ENCODE measurements at regions of chr6 and their contacts with region 1.

Region 1: DNA sequence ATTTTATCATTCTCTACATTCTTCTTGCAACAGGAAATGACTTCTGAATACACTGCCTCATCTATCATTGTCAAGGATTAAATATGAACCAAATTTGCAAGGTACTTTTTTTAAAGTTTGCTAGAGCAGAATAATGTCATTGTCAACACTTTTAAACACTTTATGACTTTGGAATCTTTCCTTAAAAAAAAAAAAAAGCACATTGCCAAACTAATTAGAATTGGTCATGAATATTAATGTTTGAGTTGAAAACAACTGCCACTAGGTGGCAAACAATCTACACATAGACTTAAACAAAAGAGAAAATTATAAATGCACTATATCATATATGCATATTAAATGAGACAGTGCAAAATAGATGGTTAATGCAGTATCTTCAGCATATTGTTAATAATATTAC is 32.5 kb upstream of the TMEM244 start:
- DNase-seq: peak; percentile 15
- H3K4me3 ChIP-seq: no peak overlapping the region
- H3K27ac ChIP-seq: no peak overlapping the region
- H3K4me1 ChIP-seq: peaks cover 26% of the 10 kb centered on the region
- H3K27me3 ChIP-seq: no peaks in the 10 kb centered on the region
- CTCF ChIP-seq: peak; percentile 44

Region 2: DNA sequence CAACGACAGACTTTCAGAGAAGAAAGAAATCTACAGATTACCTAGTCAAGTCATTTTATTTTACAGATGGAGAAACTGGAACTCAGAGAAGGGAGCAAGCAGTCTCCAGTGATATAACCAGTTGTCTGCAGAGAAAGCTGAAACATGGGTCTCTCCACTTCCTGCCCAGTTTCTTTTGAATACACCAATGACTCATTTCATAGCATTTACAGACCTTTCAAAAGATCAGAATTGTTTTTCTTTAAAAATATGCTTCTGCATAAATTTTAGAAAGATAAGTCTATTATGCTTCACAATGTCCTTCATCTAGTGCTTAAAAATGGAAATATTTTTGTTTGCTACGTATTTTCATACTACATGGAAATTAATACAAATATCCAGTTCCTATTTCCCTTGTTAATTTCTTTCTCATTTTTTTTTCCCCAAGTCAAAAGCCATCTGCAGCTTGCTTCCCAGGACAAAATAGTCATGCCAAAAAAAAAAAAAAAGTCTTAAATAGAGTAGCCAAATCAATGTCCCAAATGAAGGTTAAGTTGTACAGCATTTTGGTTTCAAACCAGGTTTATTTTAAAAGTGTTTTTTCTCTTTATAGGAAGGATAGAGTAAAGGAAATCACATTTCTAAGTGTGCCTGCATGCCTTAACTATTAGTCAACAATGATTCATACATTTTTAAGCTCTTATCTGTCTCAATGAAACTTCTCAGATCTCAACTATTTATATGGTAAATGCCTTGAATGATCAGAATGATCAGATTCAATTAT is 220.6 kb before region 1 on chr6:
- CTCF ChIA-PET with region 1: no interaction called
- dilution Hi-C with region 1: no loop called
- in situ Hi-C with region 1: no loop called
- intact Hi-C with region 1: no loop called
- DNase-seq: peak; percentile 65
- H3K4me3 ChIP-seq: peak overlapping the region in 2 of 3 experiments; percentile 12 to 24
- H3K27ac ChIP-seq: peak overlapping the region; percentile 83
- H3K4me1 ChIP-seq: peaks cover 60% of the 10 kb centered on the region
- H3K27me3 ChIP-seq: no peaks in the 10 kb centered on the region
- CTCF ChIP-seq: no peak

Region 3: GRCh38 chr6:129936329-129937165 is 42.9 kb after region 1 on chr6:
- CTCF ChIA-PET with region 1: interaction called, 3 read pairs
- dilution Hi-C with region 1: no loop called
- in situ Hi-C with region 1: no loop called
- intact Hi-C with region 1: loop called (anchors 1 kb)
- DNase-seq: peak; percentile 62
- H3K4me3 ChIP-seq: peak overlapping the region in 1 of 3 experiments; percentile 6
- H3K27ac ChIP-seq: no peak overlapping the region
- H3K4me1 ChIP-seq: no peaks in the 10 kb centered on the region
- H3K27me3 ChIP-seq: no peaks in the 10 kb centered on the region
- CTCF ChIP-seq: peak; percentile 53 to 70

Region 4: DNA sequence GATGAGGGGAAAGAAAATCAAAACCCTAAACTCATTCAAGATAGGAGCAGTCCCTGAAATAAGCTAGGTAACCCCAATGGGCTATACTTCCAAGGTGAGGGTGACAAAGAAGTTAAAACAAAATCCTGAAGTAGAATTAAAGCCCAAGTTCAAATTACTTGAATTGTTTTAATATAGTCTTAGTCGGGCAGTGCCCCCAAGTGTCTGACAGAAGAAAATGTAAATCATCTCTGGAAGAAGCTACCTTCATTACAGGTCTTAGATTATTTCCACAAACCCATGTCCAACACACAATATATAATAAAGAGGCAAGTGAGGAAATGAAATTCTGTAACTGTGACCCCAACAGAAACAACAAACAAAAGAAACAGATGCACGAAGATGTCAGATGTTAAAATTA is 88.0 kb after region 1 on chr6:
- CTCF ChIA-PET with region 1: interaction called, 4 read pairs
- dilution Hi-C with region 1: no loop called
- in situ Hi-C with region 1: no loop called
- intact Hi-C with region 1: loop called (anchors 1 kb)
- DNase-seq: peak; percentile 2
- H3K4me3 ChIP-seq: no peak overlapping the region
- H3K27ac ChIP-seq: no peak overlapping the region
- H3K4me1 ChIP-seq: no peaks in the 10 kb centered on the region
- H3K27me3 ChIP-seq: no peaks in the 10 kb centered on the region
- CTCF ChIP-seq: peak; percentile 29 to 50

Measured in mammary epithelial cell (primary cell).